ENCODE measurements at regions of chr7 and their contacts with region 1.

Region 1: DNA sequence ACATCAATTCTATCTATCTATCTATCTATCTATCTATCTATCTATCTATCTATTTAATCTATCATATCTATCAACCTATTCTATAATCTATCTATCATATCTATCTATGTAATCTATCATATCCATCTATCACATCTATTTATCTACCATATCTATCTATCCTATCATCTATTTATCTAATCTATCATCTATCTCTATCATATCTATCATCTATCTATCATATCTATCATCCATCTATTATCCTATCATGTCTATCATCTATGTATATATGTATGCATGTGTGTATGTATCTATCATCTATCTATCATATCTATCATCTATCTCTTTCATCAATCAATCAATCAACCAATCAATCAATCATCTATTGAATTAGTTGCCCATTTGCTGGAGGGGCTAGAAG is 159.3 kb upstream of the GALNT17 start:
- DNase-seq: no peak
- H3K4me3 ChIP-seq: no peak overlapping the region
- H3K27ac ChIP-seq: no peak overlapping the region
- H3K27me3 ChIP-seq: peaks cover 0 to 7% (median 0%) of the 10 kb centered on the region in 45 donors
- CTCF ChIP-seq: no peak

Region 2: GRCh38 chr7:70953796-70954195 is 18.9 kb before region 1 on chr7:
- intact Hi-C with region 1: loop called in 1 of 2 experiments (anchors 2 kb)
- DNase-seq: no peak
- H3K4me3 ChIP-seq: no peak overlapping the region
- H3K27ac ChIP-seq: no peak overlapping the region
- H3K27me3 ChIP-seq: peaks cover 0 to 7% (median 0%) of the 10 kb centered on the region in 45 donors
- CTCF ChIP-seq: no peak